Activated T-helper 1 cell treated with anti-CD3 and anti-CD28 coated beads, Interleukin-12 subunit alpha, Interleukin-12 subunit beta, Interleukin-2, Interleukin-4 antibody, amounts not matched to agents 30 ng/mL and 10 ng/mL and 1 ng/mL, durations not matched to agents 14 hours and 24 hours and 36 hours (primary cell): ENCODE measurements at regions of chr9 and their contacts with region 1.

Region 1: DNA sequence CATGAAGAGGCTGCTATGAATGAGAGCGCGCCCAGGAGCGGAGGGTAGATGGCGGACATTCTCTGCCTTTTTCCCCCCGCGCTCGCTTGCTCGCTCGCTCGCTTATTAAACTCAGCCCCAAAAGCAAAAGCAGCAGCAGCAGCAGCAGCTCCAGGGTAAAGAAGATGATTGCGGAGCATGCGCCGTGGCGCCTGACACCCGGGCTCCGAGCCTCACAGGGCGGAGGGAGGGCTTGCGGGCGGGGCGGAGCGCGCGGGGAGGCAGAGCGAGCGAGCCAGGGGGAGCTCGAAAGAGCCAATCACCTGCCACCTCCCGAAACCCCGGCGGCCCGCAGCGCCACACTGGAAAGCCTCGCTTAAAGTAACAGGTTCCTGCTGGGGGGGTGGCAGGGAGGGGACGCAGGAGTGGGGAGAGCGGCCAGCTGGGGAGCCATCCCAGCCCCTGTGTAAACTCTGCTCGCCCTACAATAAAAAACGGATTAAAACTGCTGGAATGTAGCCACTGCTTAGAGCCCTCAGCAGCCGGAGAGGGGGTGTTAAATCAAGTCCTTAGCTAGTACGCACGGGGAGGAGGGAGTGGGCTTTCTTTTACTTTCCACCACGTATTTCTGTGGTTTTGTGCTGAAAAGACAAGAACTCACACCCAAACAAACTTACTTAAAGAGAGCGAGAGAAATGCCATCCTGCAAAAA is at the start of gene MLLT3:
- DNase-seq: peak; percentile 97
- H3K4me3 Mint-ChIP-seq: peak within 1 kb of the TSS; percentile 88
- H3K27ac Mint-ChIP-seq: peak within 1 kb of the TSS; percentile 99
- H3K4me1 Mint-ChIP-seq: peaks cover 52% of the 10 kb centered on the region
- H3K27me3 Mint-ChIP-seq: no peaks in the 10 kb centered on the region
- total RNA-seq, gene MLLT3: 33.8 and 36.4 TPM in 2 replicates

Region 2: GRCh38 chr9:19464764-19465585 is 1157.5 kb before region 1 on chr9:
- intact Hi-C with region 1: loop called (anchors 2 kb)
- DNase-seq: peak; percentile 64
- H3K4me3 Mint-ChIP-seq: peak overlapping the region; percentile 85
- H3K27ac Mint-ChIP-seq: no peak overlapping the region
- H3K4me1 Mint-ChIP-seq: peaks cover 18% of the 10 kb centered on the region
- H3K27me3 Mint-ChIP-seq: peaks cover 8% of the 10 kb centered on the region

Region 3: GRCh38 chr9:20043035-20043434 is 579.4 kb before region 1 on chr9:
- intact Hi-C with region 1: loop called (anchors 5 kb)
- DNase-seq: no peak
- H3K4me3 Mint-ChIP-seq: peak overlapping the region; percentile 78
- H3K27ac Mint-ChIP-seq: peak overlapping the region; percentile 79
- H3K4me1 Mint-ChIP-seq: peaks cover 45% of the 10 kb centered on the region
- H3K27me3 Mint-ChIP-seq: no peaks in the 10 kb centered on the region

Region 4: DNA sequence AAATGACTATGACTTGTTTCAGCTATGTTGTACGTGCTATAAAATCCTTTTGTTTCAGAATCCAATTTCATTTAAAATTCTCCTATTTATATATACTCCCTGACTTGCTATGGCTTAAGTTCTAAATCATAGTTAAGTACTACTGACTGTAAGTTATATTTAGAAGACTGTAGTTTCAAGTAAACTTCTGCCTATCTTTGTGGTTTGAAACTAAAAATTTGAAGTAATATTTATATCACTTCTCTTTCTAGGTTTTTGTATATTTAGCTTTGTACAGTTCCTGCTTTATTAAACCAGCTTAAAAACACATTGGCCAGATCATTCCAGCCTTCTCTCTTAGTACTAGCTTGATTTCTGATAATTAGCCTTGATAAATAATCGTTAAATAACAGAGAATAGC is 196.5 kb before region 1 on chr9:
- intact Hi-C with region 1: loop called (anchors 2 kb)
- DNase-seq: no peak
- H3K4me3 Mint-ChIP-seq: no peak overlapping the region
- H3K27ac Mint-ChIP-seq: no peak overlapping the region
- H3K4me1 Mint-ChIP-seq: no peaks in the 10 kb centered on the region
- H3K27me3 Mint-ChIP-seq: no peaks in the 10 kb centered on the region

Region 5: GRCh38 chr9:20604562-20604961 is 17.9 kb before region 1 on chr9:
- intact Hi-C with region 1: loop called (anchors 1 kb)
- DNase-seq: no peak
- H3K4me3 Mint-ChIP-seq: peak overlapping the region; percentile 67
- H3K27ac Mint-ChIP-seq: peak overlapping the region; percentile 49
- H3K4me1 Mint-ChIP-seq: peaks cover 71% of the 10 kb centered on the region
- H3K27me3 Mint-ChIP-seq: no peaks in the 10 kb centered on the region

Region 6: DNA sequence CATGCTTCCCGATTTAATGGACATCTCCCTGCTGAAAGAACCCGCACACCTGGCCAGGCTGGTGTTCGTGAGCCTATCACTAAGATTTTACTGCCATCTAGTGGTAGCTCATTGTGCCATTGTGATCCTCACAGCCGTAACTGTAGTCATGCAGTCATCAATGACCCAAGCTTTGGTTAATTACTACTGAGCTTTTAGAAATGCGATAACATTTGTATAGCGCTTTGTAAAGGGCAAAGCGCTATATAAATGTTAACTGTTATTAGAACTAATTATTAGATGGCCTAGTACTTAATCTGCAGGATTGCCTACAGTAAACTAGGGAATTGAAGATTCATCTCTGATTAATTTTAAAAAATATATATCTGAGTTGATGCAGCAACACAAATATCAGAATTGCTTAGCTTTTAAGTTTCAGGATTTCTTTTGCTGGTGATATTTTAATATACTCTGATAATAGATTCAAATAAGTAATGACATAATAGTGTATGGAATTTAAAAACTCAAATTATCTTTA is 318.8 kb after region 1 on chr9:
- intact Hi-C with region 1: loop called (anchors 1 kb)
- DNase-seq: peak; percentile 28
- H3K4me3 Mint-ChIP-seq: no peak overlapping the region
- H3K27ac Mint-ChIP-seq: no peak overlapping the region
- H3K4me1 Mint-ChIP-seq: peaks cover 7% of the 10 kb centered on the region
- H3K27me3 Mint-ChIP-seq: no peaks in the 10 kb centered on the region